Panc1 (cell line): ENCODE measurements at regions of chr1 and their contacts with region 1.

Region 1: DNA sequence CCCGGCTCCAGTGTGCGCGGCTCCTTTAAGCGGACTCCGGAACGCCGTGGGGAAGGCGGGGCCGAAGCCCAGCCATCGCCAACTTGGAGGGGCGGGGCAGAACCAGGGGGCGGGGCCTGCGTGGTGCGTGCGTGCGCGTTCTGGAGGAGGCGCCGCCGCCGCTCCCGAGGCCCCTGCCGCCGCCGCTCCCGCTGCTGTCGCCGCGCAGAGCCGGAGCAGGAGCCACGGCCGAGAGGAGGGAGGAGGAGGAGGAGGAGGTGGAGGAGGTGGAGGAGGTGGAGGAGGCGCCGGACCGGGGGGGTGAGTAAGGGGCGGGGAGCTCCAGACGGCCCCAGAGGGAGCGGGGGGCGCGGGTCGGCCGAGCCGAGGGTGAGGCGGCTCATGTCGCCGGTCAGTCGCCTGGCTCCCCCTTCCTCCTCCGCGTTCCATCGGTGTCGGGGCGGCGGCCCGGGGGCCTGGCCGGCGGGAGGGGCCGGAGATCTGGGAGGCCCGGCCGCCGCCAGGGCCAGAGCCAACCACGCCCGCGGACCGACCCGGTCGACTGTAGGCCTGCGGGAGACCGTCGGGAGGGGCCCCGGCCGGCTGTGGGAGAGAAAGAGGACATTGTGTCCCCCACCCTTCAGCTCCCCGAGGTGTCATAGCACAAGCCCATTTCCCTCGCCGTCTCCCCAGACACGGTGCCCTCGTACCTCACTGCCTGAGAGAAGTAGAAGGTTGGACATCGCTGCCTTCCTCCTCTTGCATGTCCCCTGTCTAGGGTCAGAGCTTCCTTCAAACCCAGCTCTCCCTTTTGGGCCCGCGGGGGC is at the start of gene RAP1A:
- DNase-seq: peak; percentile 22
- ATAC-seq: peak; percentile 98
- H3K4me3 ChIP-seq: peak within 1 kb of the TSS; percentile 69 to 78
- H3K27ac ChIP-seq: peak within 1 kb of the TSS; percentile 84
- H3K4me1 ChIP-seq: peaks cover 6% of the 10 kb centered on the region; the same call in 1 of the 2 replicates
- H3K27me3 ChIP-seq: no peaks in the 10 kb centered on the region
- CTCF ChIP-seq: no peak
- total RNA-seq, gene RAP1A: 37.1 TPM

Region 2: DNA sequence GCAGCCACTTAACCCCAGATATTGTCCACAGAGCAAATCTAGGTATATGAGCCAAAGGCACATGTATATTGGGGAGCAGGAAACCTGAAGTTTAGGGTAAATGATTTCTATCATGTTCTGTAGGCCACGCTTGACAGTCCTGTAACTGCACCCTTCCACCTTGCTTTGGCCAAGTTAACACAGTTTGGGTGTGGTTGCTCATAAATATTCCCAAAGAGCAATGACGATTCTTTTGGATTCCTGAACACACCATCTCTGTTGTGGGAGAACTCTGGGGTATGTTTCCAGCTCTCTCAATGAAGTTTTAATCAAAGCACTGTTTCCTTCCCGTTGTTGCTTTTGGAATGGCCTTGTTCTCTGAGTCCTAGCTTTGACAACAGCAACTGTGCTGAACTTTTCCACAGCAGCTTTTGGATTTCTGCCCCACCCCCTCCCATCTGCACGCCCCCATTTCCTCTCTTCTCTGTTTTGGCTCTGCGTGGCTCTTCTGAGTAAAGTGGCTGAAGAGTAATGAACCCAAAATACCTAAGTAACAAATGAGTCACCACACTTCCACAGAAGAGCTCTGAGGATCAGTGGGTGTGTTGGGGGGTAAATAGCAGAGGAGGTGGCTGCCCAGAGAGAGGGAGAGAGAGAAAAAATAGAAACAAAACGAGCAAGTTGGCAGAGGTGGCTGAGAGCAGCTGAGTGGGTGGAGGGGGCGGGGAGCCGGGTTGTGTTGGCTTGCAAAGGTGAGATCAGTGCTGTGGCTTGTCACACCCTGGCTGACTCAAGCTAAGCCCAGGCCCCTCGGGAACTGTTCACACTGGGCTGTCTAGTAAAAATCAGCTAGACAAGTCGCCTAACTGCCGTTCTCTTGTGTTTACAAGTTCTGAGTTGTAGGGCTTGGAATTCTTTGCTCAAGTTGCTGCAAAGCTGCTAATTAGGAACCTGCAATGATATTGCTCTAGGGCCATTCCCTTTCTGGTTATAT is 27.2 kb before region 1 on chr1:
- CTCF ChIA-PET with region 1: no interaction called
- POLR2A ChIA-PET with region 1: interaction called, 12 read pairs
- in situ Hi-C with region 1: no loop called
- intact Hi-C with region 1: no loop called
- DNase-seq: peak; percentile 27
- ATAC-seq: peak; percentile 92
- H3K4me3 ChIP-seq: no peak overlapping the region
- H3K27ac ChIP-seq: 0 out of 2 replicates have a peak overlapping the region, but pooled peaks have one; percentile 29
- H3K4me1 ChIP-seq: peaks cover 3% of the 10 kb centered on the region; the same call in 1 of the 2 replicates
- H3K27me3 ChIP-seq: no peaks in the 10 kb centered on the region
- CTCF ChIP-seq: no peak